ENCODE measurements at regions of chr15 and their contacts with region 1.

Region 1: GRCh38 chr15:101269479-101270223 is 7.6 kb downstream of the SELENOS start:
- DNase-seq: no peak
- ATAC-seq: peak in 3 of 4 donors; percentile 30 to 37 (median 32)
- H3K4me3 ChIP-seq: no peak overlapping the region
- H3K27ac ChIP-seq: no peak overlapping the region
- H3K4me1 ChIP-seq: peaks cover 20% of the 10 kb centered on the region
- H3K27me3 ChIP-seq: no peaks in the 10 kb centered on the region
- CTCF ChIP-seq: peak; percentile 19

Region 2: GRCh38 chr15:100612539-100612938 is 657.1 kb before region 1 on chr15:
- intact Hi-C with region 1: loop called in 1 of 2 experiments (anchors 10 kb)
- DNase-seq: no peak
- ATAC-seq: no peak
- H3K4me3 ChIP-seq: no peak overlapping the region
- H3K27ac ChIP-seq: no peak overlapping the region
- H3K4me1 ChIP-seq: peaks cover 9% of the 10 kb centered on the region
- H3K27me3 ChIP-seq: no peaks in the 10 kb centered on the region
- CTCF ChIP-seq: no peak

Region 3: DNA sequence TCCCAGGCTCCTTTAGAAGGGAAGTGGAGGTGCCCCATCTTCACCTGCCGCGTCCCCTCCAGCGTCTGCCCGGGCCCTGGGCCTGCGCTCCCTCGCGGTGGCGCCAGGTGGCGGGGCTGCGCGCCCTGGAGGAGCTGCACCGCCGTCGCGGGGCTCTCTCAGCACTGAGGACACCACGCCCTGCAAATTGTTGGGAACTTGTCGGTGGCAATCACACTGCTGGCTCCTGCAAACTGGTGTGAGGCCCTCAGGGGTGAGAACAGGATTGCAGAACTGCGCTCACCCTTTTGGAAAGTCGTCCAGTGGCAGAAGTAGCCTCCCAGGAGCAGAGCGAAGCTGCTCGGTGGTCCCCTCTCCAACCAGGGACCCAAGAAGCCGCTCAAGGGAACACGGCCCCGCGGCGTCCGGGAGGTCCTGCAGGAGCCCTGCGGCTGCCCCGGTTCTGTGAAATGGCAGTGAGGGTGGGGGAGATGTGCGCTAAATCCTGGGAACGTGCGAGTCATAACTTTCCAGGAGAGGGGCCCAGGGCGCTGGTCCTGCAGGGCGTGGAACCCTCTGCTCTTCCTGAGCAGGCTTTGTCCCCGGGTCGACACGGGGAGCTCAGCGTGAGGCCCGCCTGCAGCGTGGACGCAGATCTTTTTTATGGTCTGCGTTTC is 351.5 kb before region 1 on chr15:
- intact Hi-C with region 1: loop called in 1 of 2 experiments (anchors 10 kb)
- DNase-seq: peak; percentile 82 to 89
- ATAC-seq: peak; percentile 85 to 95 (median 94)
- H3K4me3 ChIP-seq: peak overlapping the region; percentile 83
- H3K27ac ChIP-seq: peak overlapping the region; percentile 67
- H3K4me1 ChIP-seq: peaks cover 14% of the 10 kb centered on the region
- H3K27me3 ChIP-seq: peaks cover 0 to 14% (median 1%) of the 10 kb centered on the region in 3 donors
- CTCF ChIP-seq: peak; percentile 89

Region 4: DNA sequence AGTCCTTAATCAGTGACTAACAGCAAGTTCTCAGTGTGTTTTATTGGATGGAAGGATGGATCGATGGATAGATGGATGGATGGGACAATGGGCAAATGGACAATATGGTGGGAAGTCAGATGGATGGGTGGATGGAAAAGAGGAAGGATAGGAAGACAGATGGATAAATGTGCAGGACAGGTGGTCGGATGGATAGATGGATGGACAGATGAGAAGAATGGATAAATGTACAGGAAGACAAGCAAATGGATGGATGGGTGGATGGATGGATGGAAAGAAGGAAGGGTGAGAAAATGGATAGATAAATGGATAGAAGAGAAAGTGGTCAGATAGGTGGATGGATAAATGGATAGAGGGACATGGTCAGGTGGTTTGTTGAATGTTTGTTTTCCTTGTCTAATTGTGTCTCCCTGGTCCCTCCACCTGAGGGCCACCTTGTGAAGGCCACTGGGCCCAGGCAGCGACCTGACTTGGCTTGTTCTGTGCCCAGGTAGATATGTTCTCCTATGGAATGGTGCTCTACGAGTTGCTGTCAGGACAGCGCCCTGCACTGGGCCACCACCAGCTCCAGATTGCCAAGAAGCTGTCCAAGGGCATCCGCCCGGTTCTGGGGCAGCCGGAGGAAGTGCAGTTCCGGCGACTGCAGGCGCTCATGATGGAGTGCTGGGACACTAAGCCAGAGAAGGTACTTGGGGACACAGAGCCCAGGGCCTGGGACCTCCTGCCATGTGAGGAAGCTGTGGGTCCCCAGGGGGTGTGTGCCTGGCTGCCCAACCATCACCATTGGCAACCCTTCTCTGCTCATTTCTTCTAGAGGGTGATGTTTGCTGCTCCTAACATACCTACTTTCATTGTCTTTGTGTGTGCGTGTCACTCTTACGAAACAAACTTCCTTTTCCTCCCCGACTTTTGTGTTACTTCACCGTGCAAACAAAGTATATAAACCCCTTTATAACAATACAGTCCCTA is 213.0 kb before region 1 on chr15:
- intact Hi-C with region 1: no loop called
- DNase-seq: no peak
- ATAC-seq: no peak
- H3K4me3 ChIP-seq: no peak overlapping the region
- H3K27ac ChIP-seq: no peak overlapping the region
- H3K4me1 ChIP-seq: no peaks in the 10 kb centered on the region
- H3K27me3 ChIP-seq: no peaks in the 10 kb centered on the region
- CTCF ChIP-seq: no peak

Region 5: GRCh38 chr15:101088788-101089583 is 180.7 kb before region 1 on chr15:
- intact Hi-C with region 1: loop called in 1 of 2 experiments (anchors 2 kb)
- DNase-seq: peak; percentile 78 to 87
- ATAC-seq: peak; percentile 81 to 96 (median 91)
- H3K4me3 ChIP-seq: peak overlapping the region; percentile 48
- H3K27ac ChIP-seq: no peak overlapping the region
- H3K4me1 ChIP-seq: peaks cover 11% of the 10 kb centered on the region
- H3K27me3 ChIP-seq: no peaks in the 10 kb centered on the region
- CTCF ChIP-seq: peak; percentile 100

Region 6: GRCh38 chr15:101232677-101233076 is 37.0 kb before region 1 on chr15:
- intact Hi-C with region 1: no loop called
- DNase-seq: peak in 1 of 2 donors; percentile 36
- ATAC-seq: peak; percentile 87 to 96 (median 92)
- H3K4me3 ChIP-seq: peak overlapping the region; percentile 9
- H3K27ac ChIP-seq: peak overlapping the region; percentile 50
- H3K4me1 ChIP-seq: peaks cover 17% of the 10 kb centered on the region
- H3K27me3 ChIP-seq: no peaks in the 10 kb centered on the region
- CTCF ChIP-seq: no peak

Measured in psoas muscle (tissue), 8 donors.